CD4-positive, alpha-beta T cell (primary cell): ENCODE measurements at regions of chr22 and their contacts with region 1.

Region 1: GRCh38 chr22:26511857-26512793 is at the start of gene TFIP11:
- DNase-seq: peak; percentile 80 to 94 (median 88)
- ATAC-seq: peak; percentile 89
- H3K4me3 ChIP-seq: peak within 1 kb of the TSS; percentile 99
- H3K4me3 Mint-ChIP-seq: peak within 1 kb of the TSS; percentile 98
- H3K27ac ChIP-seq: peak within 1 kb of the TSS; percentile 71 to 91
- H3K27ac Mint-ChIP-seq: peak within 1 kb of the TSS; percentile 95
- H3K4me1 ChIP-seq: peaks cover 22% of the 10 kb centered on the region
- H3K4me1 Mint-ChIP-seq: peaks cover 46% of the 10 kb centered on the region
- H3K27me3 ChIP-seq: no peaks in the 10 kb centered on the region
- H3K27me3 Mint-ChIP-seq: no peaks in the 10 kb centered on the region
- CTCF ChIP-seq: no peak
- total RNA-seq, gene TFIP11: 111 TPM

Region 2: DNA sequence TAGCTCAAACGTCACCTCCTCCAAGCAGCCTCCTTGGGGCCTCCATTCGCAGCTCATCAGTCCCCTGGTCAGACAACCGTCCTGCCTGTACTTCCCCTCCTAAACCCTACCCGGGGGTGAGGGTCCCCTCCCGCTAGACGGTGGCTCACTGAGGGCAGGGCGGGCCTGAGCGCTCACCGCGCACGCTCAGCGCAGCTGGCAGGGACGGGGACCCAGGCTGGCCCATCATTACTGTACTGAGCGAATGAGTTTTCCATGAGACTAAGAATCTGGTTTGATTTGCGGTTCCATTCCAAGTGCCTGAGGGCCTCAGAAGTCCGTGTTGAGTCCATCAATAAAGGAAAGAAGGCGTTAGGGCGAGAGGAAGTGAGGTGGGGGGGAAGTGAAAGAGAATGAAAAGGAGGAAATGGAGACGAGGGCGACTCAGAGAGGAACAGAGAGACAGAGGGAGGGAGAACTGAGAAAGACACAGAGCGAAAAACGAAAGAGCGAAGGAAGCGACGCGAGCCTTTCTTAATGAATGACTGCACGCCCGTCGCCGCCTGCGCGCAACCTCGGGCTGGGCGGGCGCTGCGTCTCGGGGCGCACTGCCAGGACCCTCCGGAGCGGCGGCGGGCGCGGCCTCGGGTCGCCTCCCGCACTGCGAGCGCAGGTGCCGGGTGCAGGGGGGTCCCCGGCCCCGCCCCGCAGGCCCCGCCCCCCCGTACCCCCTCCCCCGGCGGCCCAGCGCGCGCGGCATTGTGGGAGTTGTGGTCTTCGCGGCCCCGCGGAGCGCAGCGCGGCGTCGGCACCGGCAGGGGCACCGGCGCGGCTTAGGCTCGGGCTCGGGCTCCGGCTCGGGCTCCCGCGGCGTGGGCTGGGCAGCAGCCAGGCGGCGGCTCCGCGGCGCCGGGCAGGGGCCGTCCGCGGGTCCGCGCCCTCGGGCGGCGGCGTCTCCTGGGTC is 83.3 kb before region 1 on chr22 and contains the start of gene ASPHD2:
- CTCF ChIA-PET with region 1: no interaction called
- POLR2A ChIA-PET with region 1: interaction called, 3 read pairs
- intact Hi-C with region 1: loop called in 1 of 2 experiments (anchors 1 kb)
- DNase-seq: peak; percentile 61 to 92 (median 77)
- ATAC-seq: peak; percentile 85
- H3K4me3 ChIP-seq: peak within 1 kb of the TSS; percentile 87
- H3K4me3 Mint-ChIP-seq: peak within 1 kb of the TSS; percentile 98
- H3K27ac ChIP-seq: peak within 1 kb of the TSS; percentile 96 to 97
- H3K27ac Mint-ChIP-seq: peak within 1 kb of the TSS; percentile 94
- H3K4me1 ChIP-seq: peaks cover 30% of the 10 kb centered on the region
- H3K4me1 Mint-ChIP-seq: peaks cover 31% of the 10 kb centered on the region
- H3K27me3 ChIP-seq: no peaks in the 10 kb centered on the region
- H3K27me3 Mint-ChIP-seq: no peaks in the 10 kb centered on the region
- CTCF ChIP-seq: no peak
- total RNA-seq, gene ASPHD2: 0.70 to 0.85 TPM